ENCODE measurements at regions of chr17 and their contacts with region 1.

Region 1: GRCh38 chr17:80454557-80455335 is 21.7 kb downstream of the NPTX1 start:
- DNase-seq: peak; percentile 96
- H3K4me3 Mint-ChIP-seq: peak overlapping the region; percentile 93
- H3K27ac Mint-ChIP-seq: peak overlapping the region; percentile 95
- H3K4me1 Mint-ChIP-seq: peaks cover 45% of the 10 kb centered on the region
- H3K27me3 Mint-ChIP-seq: peaks cover 4% of the 10 kb centered on the region

Region 2: DNA sequence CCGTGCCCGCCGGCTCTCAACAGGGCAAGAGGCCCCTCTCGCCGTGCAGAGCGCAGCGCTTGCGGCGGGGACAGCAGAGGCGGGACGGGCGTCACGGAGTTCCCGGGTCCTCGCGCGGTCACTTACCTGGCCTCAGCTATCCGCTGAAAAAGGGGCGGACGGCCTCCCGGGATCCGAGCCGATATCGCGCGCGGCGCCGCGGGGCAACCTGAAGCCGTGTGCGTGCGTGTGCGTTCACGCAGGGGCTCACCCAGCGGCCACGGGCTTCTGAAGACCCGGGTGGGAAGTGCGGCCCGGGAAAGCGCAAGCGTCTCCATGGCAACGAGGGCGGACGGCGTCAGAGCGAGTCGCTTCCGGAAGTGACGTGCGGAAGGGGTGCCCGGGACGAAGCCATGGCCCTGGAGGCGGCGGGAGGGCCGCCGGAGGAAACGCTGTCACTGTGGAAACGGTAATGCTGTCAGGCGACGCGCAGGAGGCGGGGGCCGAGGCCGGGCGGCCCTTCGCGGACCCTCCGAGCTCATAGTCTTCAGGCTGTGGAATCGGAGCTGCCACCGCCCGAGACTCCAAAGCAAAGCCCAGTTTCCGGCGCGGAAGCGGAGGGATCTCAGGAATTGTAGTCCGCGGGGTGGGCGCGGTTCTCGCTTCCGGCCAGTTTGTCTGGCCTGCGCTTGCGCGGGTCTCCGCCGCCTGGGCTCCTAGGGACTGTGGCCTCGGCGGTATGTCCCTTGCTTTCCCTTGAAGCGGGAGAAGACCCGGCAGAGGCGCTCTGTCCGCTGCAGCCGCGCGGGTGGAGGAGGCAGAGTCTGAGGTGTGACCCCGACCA is 39.7 kb before region 1 on chr17 and contains the start of gene ENDOV:
- intact Hi-C with region 1: loop called (anchors 1 kb)
- DNase-seq: peak; percentile 90
- H3K4me3 Mint-ChIP-seq: peak within 1 kb of the TSS; percentile 87
- H3K27ac Mint-ChIP-seq: peak within 1 kb of the TSS; percentile 65
- H3K4me1 Mint-ChIP-seq: peaks cover 18% of the 10 kb centered on the region
- H3K27me3 Mint-ChIP-seq: peaks cover 16% of the 10 kb centered on the region
- total RNA-seq, gene ENDOV: 15.6 and 16.9 TPM in 2 replicates

Region 3: GRCh38 chr17:80477647-80478478 is 23.1 kb after region 1 on chr17:
- intact Hi-C with region 1: loop called (anchors 2 kb)
- DNase-seq: no peak
- H3K4me3 Mint-ChIP-seq: no peak overlapping the region
- H3K27ac Mint-ChIP-seq: no peak overlapping the region
- H3K4me1 Mint-ChIP-seq: peaks cover 8% of the 10 kb centered on the region
- H3K27me3 Mint-ChIP-seq: peaks cover 50% of the 10 kb centered on the region

Region 4: GRCh38 chr17:80544655-80545498 is 90.1 kb after region 1 on chr17 and contains the start of gene RPTOR:
- intact Hi-C with region 1: loop called (anchors 2 kb)
- DNase-seq: peak; percentile 85
- H3K4me3 Mint-ChIP-seq: peak within 1 kb of the TSS; percentile 93
- H3K27ac Mint-ChIP-seq: peak within 1 kb of the TSS; percentile 94
- H3K4me1 Mint-ChIP-seq: peaks cover 32% of the 10 kb centered on the region
- H3K27me3 Mint-ChIP-seq: peaks cover 5% of the 10 kb centered on the region
- total RNA-seq, gene RPTOR: 63.5 and 66.7 TPM in 2 replicates

Region 5: DNA sequence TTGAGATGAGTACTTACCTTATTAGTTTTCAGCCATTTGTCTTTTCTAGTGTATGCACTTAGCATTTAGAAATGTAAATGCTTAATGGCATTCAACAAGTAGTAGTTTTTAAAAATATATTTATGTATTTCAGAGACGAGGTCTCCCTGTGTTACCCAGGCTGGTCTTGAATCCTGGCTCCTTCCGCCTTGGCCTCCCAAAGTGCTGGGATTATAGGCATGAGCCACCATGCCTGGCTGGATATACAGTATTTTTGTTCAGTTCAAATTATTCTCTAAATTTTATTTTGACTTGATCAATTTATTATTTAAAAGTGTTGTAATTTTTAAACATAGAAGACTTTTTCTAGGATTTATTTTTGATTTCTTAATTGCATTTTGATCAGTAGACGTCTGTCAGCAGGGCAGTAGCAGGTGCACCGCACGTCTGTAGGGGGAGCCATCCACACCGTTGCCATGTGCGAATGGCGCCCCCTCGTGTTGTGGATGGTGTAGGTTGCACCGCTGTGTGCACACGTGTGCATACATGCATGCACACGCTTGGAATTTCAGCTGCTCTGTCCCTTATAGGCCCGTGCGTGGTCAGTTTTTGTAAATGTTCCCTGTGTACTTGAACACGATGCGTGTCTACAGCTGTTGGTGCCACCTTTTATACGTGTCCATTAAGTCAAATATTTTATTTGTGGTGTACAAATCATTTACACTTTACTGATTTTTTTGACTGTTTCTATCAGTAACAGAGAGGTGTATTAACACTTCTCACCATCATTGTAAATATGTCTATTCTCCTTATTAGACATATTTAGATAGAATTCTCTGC is 120.5 kb after region 1 on chr17:
- intact Hi-C with region 1: loop called (anchors 1 kb)
- DNase-seq: peak; percentile 84
- H3K4me3 Mint-ChIP-seq: no peak overlapping the region
- H3K27ac Mint-ChIP-seq: peak overlapping the region; percentile 2
- H3K4me1 Mint-ChIP-seq: peaks cover 31% of the 10 kb centered on the region
- H3K27me3 Mint-ChIP-seq: no peaks in the 10 kb centered on the region

Region 6: GRCh38 chr17:80899402-80900268 is 444.9 kb after region 1 on chr17:
- intact Hi-C with region 1: loop called (anchors 2 kb)
- DNase-seq: peak; percentile 72
- H3K4me3 Mint-ChIP-seq: no peak overlapping the region
- H3K27ac Mint-ChIP-seq: peak overlapping the region; percentile 48
- H3K4me1 Mint-ChIP-seq: peaks cover 56% of the 10 kb centered on the region
- H3K27me3 Mint-ChIP-seq: no peaks in the 10 kb centered on the region

Region 7: GRCh38 chr17:81034779-81035388 is 580.1 kb after region 1 on chr17 and contains the start of gene BAIAP2:
- intact Hi-C with region 1: loop called (anchors 1 kb)
- DNase-seq: peak; percentile 89
- H3K4me3 Mint-ChIP-seq: peak within 1 kb of the TSS; percentile 83
- H3K27ac Mint-ChIP-seq: peak within 1 kb of the TSS; percentile 84
- H3K4me1 Mint-ChIP-seq: peaks cover 17% of the 10 kb centered on the region
- H3K27me3 Mint-ChIP-seq: peaks cover 34% of the 10 kb centered on the region
- total RNA-seq, gene BAIAP2: 4.3 and 5.8 TPM in 2 replicates